Colonic mucosa (tissue), 4 donors: ENCODE measurements at regions of chr6 and their contacts with region 1.

Region 1: GRCh38 chr6:121430514-121431460 is 4.7 kb upstream of the GJA1 start:
- DNase-seq: no peak
- H3K4me3 ChIP-seq: no peak overlapping the region
- H3K27ac ChIP-seq: no peak overlapping the region
- H3K4me1 ChIP-seq: no peaks in the 10 kb centered on the region
- H3K27me3 ChIP-seq: no peaks in the 10 kb centered on the region
- CTCF ChIP-seq: peak; percentile 42

Region 2: DNA sequence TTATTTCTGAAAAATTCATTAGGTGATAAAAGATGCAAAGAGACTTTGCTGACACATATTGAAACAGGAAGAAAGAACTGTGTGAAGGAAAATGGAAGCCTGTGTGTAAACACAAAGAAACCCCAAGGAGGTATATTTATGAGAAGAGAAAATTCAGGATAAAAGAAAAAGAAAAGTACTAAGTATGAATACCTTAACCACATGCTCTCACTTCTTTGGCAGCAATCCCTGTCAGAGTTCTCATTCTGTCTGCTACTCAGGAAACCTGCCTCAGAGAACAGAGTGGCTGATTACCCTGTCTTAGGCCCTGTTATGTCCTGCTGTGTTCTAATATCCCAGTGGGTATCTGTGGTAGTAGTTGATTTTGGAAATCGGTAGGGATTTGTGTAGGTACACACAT is 554.4 kb before region 1 on chr6:
- intact Hi-C with region 1: no loop called
- DNase-seq: no peak
- H3K4me3 ChIP-seq: no peak overlapping the region
- H3K27ac ChIP-seq: no peak overlapping the region
- H3K4me1 ChIP-seq: no peaks in the 10 kb centered on the region
- H3K27me3 ChIP-seq: no peaks in the 10 kb centered on the region
- CTCF ChIP-seq: no peak

Region 3: DNA sequence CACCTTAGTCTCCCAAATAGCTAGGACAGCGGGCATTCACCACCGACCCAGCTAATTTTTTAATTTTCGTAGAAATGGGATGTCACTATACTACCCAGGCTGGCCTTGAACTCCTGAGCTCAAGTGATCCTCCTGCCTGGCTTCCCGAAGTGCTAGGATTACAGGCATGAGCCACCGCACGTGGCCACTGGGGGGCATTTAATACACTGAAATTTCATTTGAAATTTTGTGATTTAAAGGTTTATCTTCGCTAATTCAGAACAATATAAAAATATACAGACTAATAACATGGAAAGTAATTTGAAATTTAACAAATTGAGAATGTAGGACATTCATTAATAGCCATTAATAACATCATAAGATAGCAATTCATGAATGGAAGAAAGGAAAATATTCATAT is 76.0 kb before region 1 on chr6:
- intact Hi-C with region 1: no loop called
- DNase-seq: no peak
- H3K4me3 ChIP-seq: no peak overlapping the region
- H3K27ac ChIP-seq: no peak overlapping the region
- H3K4me1 ChIP-seq: no peaks in the 10 kb centered on the region
- H3K27me3 ChIP-seq: no peaks in the 10 kb centered on the region
- CTCF ChIP-seq: no peak

Region 4: DNA sequence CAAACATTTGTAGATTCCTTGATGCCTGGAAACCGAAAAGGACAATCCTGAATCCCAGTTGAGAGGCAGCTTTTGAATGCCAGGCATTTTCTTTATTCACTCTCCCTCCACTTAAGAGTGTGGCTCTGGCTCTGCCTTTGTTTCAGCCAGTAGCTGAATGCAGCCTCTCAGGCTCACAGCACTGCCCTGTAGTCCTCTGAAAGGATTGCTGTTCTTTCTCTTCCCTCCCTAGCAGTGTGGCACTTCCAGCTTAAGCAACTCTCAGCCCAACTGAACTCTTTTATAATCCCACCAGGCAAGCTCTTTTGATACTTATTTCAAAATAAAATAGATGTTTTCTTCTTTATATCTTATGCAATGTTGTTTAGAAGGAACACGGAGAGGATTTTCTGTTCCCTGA is 420.3 kb after region 1 on chr6:
- intact Hi-C with region 1: loop called (anchors 10 kb)
- DNase-seq: no peak
- H3K4me3 ChIP-seq: no peak overlapping the region
- H3K27ac ChIP-seq: no peak overlapping the region
- H3K4me1 ChIP-seq: no peaks in the 10 kb centered on the region
- H3K27me3 ChIP-seq: no peaks in the 10 kb centered on the region
- CTCF ChIP-seq: no peak

Region 5: GRCh38 chr6:122033539-122034181 is 602.9 kb after region 1 on chr6:
- intact Hi-C with region 1: loop called (anchors 5 kb)
- DNase-seq: no peak
- H3K4me3 ChIP-seq: no peak overlapping the region
- H3K27ac ChIP-seq: no peak overlapping the region
- H3K4me1 ChIP-seq: no peaks in the 10 kb centered on the region
- H3K27me3 ChIP-seq: no peaks in the 10 kb centered on the region
- CTCF ChIP-seq: peak; percentile 27

Region 6: DNA sequence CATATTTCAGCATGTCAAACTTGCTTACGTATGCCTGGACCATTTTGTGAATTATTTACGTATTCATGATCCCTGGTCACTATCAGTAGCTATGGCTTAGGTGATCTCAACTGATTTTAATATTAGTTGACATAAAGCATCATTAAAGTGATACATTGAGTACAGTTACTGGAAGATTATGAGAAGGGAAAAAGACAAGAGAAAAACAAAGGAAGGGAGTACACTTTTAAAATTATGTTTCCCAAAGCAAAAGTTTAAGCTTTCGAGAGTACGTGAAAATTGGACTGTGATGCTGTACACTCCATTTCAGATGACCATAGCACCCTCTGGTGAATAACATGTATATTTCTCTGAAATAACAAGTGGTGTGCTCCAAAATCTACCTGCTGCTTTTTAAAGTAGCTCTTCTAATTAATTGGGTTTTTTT is 753.6 kb after region 1 on chr6:
- intact Hi-C with region 1: loop called (anchors 10 kb)
- DNase-seq: no peak
- H3K4me3 ChIP-seq: no peak overlapping the region
- H3K27ac ChIP-seq: no peak overlapping the region
- H3K4me1 ChIP-seq: no peaks in the 10 kb centered on the region
- H3K27me3 ChIP-seq: no peaks in the 10 kb centered on the region
- CTCF ChIP-seq: no peak